Gastrocnemius medialis (tissue), 4 donors: ENCODE measurements at regions of chr5 and their contacts with region 1.

Region 1: DNA sequence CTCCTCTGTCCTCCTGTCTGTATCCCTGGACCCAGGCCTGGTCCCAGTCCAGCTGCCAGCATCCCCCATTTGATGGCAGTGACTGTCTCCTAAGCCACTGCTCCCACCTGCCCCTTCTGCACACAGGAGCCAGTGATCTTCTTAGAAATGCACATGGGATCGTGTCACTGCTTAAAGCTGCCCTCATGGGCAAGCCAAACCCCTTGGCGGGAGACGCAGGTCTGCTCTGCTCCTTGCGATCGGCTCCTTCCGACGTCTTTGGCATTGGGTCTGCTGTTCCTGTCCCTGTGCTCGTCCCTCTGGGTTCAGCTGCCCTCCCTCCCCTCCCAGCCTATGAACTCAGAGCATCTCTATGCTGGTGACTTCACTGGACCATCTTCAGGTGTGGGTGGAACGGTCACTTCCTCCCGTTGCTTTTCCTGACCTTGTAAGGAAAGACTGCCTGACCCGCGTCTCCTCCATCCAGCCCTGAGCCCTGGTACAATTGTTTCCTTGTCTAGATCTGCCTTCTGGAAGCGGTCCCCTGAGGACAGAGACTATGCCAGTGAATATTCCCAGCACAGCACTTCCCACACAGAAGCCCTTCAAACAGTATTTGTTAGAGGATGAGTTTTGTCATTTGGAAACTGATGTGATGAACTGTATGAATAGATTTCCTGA is 116.5 kb downstream of the ZNF354C start:
- DNase-seq: no peak
- ATAC-seq: no peak
- H3K4me3 ChIP-seq: no peak overlapping the region
- H3K27ac ChIP-seq: no peak overlapping the region
- H3K4me1 ChIP-seq: no peaks in the 10 kb centered on the region
- H3K27me3 ChIP-seq: no peaks in the 10 kb centered on the region
- CTCF ChIP-seq: no peak
- POLR2A ChIP-seq: no peak

Region 2: GRCh38 chr5:179142434-179143198 is 34.1 kb before region 1 on chr5:
- in situ Hi-C with region 1: no loop called
- intact Hi-C with region 1: no loop called
- DNase-seq: no peak
- ATAC-seq: no peak
- H3K4me3 ChIP-seq: no peak overlapping the region
- H3K27ac ChIP-seq: no peak overlapping the region
- H3K4me1 ChIP-seq: no peaks in the 10 kb centered on the region
- H3K27me3 ChIP-seq: no peaks in the 10 kb centered on the region
- CTCF ChIP-seq: no peak
- POLR2A ChIP-seq: no peak

Region 3: GRCh38 chr5:179462040-179462439 is 285.3 kb after region 1 on chr5:
- in situ Hi-C with region 1: no loop called
- intact Hi-C with region 1: no loop called
- DNase-seq: no peak
- ATAC-seq: no peak
- H3K4me3 ChIP-seq: no peak overlapping the region
- H3K27ac ChIP-seq: no peak overlapping the region
- H3K4me1 ChIP-seq: no peaks in the 10 kb centered on the region
- H3K27me3 ChIP-seq: no peaks in the 10 kb centered on the region
- CTCF ChIP-seq: no peak
- POLR2A ChIP-seq: no peak

Region 4: GRCh38 chr5:179495906-179496455 is 319.3 kb after region 1 on chr5:
- in situ Hi-C with region 1: loop called in 1 of 4 experiments (anchors 10 kb)
- intact Hi-C with region 1: no loop called
- DNase-seq: no peak
- ATAC-seq: no peak
- H3K4me3 ChIP-seq: no peak overlapping the region
- H3K27ac ChIP-seq: no peak overlapping the region
- H3K4me1 ChIP-seq: no peaks in the 10 kb centered on the region
- H3K27me3 ChIP-seq: no peaks in the 10 kb centered on the region
- CTCF ChIP-seq: no peak
- POLR2A ChIP-seq: no peak